ENCODE measurements at regions of chr17 and their contacts with region 1.

Region 1: DNA sequence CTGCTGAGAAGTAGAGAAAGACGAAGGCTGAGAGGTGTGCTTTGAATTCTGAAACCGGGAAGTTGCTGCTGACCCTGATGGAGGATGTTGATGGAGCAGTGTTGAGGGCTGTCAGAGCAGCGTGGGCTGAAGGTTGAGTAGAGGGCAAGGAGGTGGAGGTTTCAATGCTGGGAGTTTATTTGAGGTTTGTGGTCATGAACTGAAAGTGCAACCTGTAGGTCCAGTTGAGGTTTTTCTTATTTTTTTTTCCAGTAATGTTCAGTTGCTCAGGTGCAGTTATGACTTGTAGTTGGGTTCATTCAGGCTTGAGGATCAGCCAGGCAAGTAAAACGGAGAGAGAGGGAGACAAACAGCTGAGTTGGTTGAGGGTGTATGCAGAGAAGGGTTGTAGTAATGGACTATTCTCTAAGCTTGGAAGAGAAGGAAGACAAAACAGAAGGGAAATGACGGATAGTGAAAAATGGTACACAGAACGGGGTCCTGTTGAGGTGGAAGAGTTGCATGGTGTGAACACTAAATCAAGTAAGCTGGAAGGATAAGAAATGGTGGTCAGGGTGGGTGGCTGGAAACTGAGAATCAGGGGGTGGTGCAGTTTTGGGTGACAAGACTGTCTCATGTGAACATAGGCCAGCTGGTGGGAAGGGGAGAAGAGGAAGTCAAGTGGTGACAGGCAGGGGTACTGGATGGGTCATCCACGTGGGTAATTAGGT is 8.7 kb upstream of the UBE2G1 start:
- DNase-seq: peak; percentile 88
- H3K4me3 Mint-ChIP-seq: peak overlapping the region; percentile 62
- H3K27ac Mint-ChIP-seq: peak overlapping the region; percentile 90
- H3K4me1 Mint-ChIP-seq: peaks cover 29% of the 10 kb centered on the region
- H3K27me3 Mint-ChIP-seq: no peaks in the 10 kb centered on the region

Region 2: DNA sequence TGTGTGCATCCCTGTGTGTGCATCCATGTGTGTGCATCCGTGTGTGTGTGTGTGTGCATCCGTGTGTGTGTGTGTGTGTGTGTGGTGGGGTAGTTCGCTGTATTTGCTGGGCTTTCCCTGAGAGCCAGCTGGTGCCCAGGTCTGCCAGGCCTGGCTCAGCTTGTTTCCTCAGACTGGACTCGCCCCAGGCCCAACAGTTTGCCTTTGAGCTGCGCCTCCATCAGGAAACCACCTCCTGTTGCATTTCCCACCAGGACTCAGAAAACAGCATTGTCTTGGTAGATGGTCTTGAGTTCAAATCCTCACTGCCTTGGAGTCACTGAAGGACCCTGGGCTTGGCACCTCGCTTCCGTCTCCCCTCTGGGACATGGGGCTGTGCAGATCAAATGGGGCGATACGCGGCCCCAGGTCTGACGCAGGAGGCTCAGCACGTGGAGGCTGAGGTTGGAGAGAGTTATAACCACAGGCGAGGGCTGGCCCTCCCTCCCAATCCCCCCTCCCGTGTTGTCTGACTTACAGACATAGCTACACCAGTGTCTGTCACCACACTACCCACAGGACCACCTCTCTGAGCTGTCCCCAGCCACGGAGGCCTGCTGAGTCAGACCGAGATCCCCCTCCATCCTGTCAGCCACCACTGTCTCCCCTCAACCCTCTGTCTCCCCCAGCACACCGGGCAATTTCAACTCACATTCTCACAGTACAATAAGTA is 578.9 kb before region 1 on chr17:
- intact Hi-C with region 1: no loop called
- DNase-seq: peak; percentile 83
- H3K4me3 Mint-ChIP-seq: peak overlapping the region; percentile 43
- H3K27ac Mint-ChIP-seq: peak overlapping the region; percentile 34
- H3K4me1 Mint-ChIP-seq: peaks cover 36% of the 10 kb centered on the region
- H3K27me3 Mint-ChIP-seq: no peaks in the 10 kb centered on the region

Region 3: GRCh38 chr17:4175921-4176807 is 199.0 kb before region 1 on chr17:
- intact Hi-C with region 1: loop called (anchors 1 kb)
- DNase-seq: peak; percentile 85
- H3K4me3 Mint-ChIP-seq: peak overlapping the region; percentile 78
- H3K27ac Mint-ChIP-seq: peak overlapping the region; percentile 88
- H3K4me1 Mint-ChIP-seq: peaks cover 51% of the 10 kb centered on the region
- H3K27me3 Mint-ChIP-seq: no peaks in the 10 kb centered on the region

Region 4: DNA sequence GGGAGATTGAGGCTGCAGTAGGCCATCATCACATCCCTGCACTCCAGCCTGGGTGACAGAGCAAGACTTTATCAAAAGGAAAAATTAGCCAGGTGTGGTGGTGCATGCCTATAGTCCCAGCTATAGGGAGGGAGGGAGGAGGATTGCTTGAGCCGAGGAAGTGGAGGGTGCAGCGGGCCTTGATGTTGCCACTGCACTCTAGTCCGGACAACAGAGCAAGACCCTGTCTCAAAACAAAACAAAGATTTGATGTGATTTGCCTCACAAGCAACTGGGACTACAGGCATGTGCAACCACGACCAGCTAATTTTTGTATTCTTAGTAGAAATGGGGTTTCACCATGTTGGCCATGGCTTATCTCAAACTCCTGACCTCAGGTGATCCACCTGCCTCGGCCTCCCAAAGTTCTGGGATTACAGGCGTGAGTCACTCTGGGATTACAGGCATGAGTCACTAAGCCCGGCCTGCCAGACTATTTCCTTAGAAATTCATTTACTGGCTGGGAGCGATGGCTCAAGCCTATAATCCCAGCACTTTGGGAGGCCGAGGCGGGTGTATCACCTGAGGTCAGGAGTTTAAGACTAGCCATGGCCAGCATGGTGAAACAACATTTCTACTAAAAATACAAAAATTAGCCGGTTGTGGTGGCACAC is 20.2 kb before region 1 on chr17:
- intact Hi-C with region 1: no loop called
- DNase-seq: no peak
- H3K4me3 Mint-ChIP-seq: no peak overlapping the region
- H3K27ac Mint-ChIP-seq: no peak overlapping the region
- H3K4me1 Mint-ChIP-seq: peaks cover 21% of the 10 kb centered on the region
- H3K27me3 Mint-ChIP-seq: no peaks in the 10 kb centered on the region

Region 5: DNA sequence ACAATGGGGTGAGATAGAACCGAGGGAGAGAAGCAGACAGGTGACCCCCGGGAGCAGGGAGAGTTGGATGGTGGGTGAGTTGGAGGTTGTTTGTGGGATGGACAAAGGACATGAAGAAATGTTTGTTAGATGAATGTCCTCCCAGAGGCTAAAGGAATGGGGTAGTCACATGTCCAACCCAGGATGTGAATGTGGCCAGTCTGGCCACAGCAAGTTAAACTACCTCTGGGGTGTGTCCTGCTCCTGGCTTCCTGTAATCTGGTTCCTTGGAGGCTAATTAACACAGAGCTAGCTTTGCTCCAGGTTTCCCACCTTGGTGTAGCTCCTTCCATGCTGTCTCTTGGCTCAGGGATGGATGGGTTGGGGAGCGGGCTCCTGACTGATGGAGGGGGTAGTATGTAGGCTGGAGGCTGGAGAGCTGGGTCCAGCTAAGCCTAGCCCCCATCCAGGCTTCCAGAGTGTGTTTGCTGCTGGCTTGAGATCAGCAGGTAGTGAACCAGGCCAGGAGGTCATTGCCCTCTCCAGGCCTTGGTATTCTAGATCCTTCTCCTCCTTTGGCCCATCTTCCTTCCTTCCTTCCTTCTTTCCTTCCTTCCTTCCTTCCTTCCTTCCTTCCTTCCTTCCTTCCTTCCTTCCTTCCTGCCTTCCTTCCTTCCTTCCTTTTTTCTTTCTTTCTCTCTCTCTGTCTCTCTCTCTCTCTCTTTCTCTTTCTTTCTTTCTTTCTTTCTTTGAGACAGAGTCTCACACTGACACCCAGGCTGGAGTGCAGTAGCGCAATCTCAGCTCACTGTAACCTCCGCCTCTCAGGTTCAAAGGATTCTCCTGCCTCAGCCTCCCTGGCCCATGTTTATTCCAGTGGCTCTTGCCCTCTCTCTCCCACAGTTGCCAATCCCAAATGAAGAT is 19.3 kb after region 1 on chr17:
- intact Hi-C with region 1: loop called (anchors 1 kb)
- DNase-seq: no peak
- H3K4me3 Mint-ChIP-seq: no peak overlapping the region
- H3K27ac Mint-ChIP-seq: peak overlapping the region; percentile 16
- H3K4me1 Mint-ChIP-seq: peaks cover 22% of the 10 kb centered on the region
- H3K27me3 Mint-ChIP-seq: no peaks in the 10 kb centered on the region

Region 6: DNA sequence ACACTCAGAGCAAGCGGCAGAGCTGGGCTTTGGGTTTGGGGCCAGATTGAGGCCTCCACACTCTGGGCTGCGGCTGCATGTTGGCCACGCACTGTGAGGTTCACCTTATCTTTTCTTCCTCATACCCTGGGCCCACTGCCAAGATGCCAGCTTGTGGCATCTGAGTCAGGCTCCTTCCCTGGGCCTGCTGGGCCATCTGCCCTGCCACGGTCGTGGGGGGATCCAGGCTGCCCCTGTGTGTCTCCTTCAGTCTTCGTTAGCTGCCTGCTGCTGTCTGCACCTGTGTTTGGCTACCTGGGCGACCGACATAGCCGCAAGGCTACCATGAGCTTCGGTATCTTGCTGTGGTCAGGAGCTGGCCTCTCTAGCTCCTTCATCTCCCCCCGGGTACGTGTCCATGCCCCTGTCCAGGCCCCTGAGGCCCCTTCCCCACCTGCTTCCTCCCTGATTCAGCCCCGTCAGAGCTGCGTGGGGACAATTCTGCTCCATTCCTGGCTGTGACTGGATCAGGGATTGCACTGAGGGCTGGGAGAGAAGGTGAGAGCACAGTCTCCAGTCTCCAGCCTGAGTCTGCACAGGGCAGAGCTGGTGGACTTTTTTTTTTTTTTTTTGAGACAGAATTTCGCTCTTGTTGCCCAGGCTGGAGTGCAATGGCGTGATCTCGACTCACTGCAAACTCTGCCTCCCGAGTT is 69.7 kb after region 1 on chr17:
- intact Hi-C with region 1: no loop called
- DNase-seq: no peak
- H3K4me3 Mint-ChIP-seq: no peak overlapping the region
- H3K27ac Mint-ChIP-seq: no peak overlapping the region
- H3K4me1 Mint-ChIP-seq: no peaks in the 10 kb centered on the region
- H3K27me3 Mint-ChIP-seq: no peaks in the 10 kb centered on the region

Region 7: DNA sequence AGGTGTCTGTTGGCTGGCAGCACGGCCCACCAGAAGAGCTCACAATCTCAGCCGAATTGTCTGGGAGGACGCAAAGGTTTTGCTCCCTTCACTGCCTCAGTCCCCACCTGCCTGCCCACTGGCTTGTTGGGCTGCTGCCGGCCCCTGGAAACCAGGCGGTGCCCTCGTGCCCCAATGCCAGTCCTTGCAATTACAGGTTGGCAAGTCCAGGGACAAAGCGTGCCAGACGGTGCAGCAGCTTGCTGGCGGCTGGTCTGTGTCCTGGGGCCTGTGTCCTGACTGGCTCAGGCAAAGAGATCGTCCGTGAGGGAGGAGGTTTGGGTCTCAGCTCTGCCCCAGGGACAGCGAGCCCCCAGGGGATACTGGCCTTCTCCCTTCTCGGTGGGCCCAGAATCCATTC is 98.9 kb after region 1 on chr17:
- intact Hi-C with region 1: no loop called
- DNase-seq: no peak
- H3K4me3 Mint-ChIP-seq: no peak overlapping the region
- H3K27ac Mint-ChIP-seq: no peak overlapping the region
- H3K4me1 Mint-ChIP-seq: peaks cover 2% of the 10 kb centered on the region
- H3K27me3 Mint-ChIP-seq: peaks cover 2% of the 10 kb centered on the region